MCF 10A (cell line): ENCODE measurements at regions of chr6 and their contacts with region 1.

Region 1: DNA sequence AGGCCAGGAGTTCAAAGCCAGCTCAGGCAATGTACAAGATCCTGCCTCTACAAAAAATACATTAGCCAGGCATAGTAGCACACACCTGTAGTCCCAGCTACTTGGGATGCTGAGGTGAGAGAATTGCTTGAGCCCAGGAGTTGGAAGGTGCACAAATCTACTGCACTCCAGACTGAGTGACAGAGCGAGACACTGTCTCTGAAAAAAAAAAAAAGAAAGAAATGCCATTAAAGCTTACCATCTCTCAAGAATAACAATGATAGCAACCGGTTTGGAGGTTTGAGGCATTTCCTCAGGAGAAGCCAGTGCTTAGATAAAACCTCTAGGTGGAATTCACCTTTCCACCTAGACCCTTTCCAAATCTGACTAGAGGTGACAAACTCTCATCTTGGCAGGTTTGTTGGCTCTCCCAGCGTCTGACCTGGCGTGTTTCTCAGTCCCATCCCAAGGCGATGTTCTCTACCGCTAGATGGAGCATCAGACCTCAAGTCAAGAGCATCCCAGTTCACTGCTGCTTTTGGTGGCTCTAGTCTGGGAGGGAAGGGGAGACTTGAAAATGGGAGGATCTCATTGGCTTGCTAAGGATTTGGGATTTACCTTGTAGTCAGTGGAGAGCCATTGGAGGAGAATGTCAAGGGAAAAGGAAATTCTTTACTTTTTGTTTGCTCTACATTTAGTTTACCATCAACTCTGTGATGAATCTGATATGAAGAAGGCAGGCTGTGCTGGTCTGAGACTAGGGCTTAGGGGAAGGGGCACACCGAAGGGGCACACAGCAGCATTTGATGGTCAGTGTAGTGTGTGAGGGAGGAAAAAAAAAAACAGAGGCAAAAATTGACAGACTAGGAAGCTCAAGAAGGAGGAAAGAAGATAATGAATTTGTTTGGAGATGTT is 67.9 kb downstream of the NCOA7 start:
- DNase-seq: peak; percentile 86
- H3K4me3 Mint-ChIP-seq: no peak overlapping the region
- H3K27ac Mint-ChIP-seq: peak overlapping the region; percentile 49
- H3K4me1 Mint-ChIP-seq: peaks cover 25% of the 10 kb centered on the region
- H3K27me3 Mint-ChIP-seq: no peaks in the 10 kb centered on the region
- CTCF ChIP-seq: peak; percentile 61

Region 2: GRCh38 chr6:125844989-125845388 is 13.7 kb before region 1 on chr6:
- CTCF ChIA-PET with region 1: interaction called, 19 read pairs
- POLR2A ChIA-PET with region 1: interaction called, 4 read pairs
- intact Hi-C with region 1: no loop called
- DNase-seq: no peak
- H3K4me3 Mint-ChIP-seq: no peak overlapping the region
- H3K27ac Mint-ChIP-seq: no peak overlapping the region
- H3K4me1 Mint-ChIP-seq: no peaks in the 10 kb centered on the region
- H3K27me3 Mint-ChIP-seq: no peaks in the 10 kb centered on the region
- CTCF ChIP-seq: no peak

Region 3: GRCh38 chr6:125906158-125906998 is 47.7 kb after region 1 on chr6:
- CTCF ChIA-PET with region 1: interaction called, 24 read pairs
- POLR2A ChIA-PET with region 1: interaction called, 3 read pairs
- intact Hi-C with region 1: no loop called
- DNase-seq: peak; percentile 69
- H3K4me3 Mint-ChIP-seq: no peak overlapping the region
- H3K27ac Mint-ChIP-seq: peak overlapping the region; percentile 24
- H3K4me1 Mint-ChIP-seq: peaks cover 41% of the 10 kb centered on the region
- H3K27me3 Mint-ChIP-seq: no peaks in the 10 kb centered on the region
- CTCF ChIP-seq: peak; percentile 59

Region 4: GRCh38 chr6:125918681-125919566 is 60.2 kb after region 1 on chr6:
- CTCF ChIA-PET with region 1: interaction called, 7 read pairs
- POLR2A ChIA-PET with region 1: interaction called, 10 read pairs
- intact Hi-C with region 1: no loop called
- DNase-seq: peak; percentile 97
- H3K4me3 Mint-ChIP-seq: peak overlapping the region; percentile 90
- H3K27ac Mint-ChIP-seq: peak overlapping the region; percentile 99
- H3K4me1 Mint-ChIP-seq: peaks cover 47% of the 10 kb centered on the region
- H3K27me3 Mint-ChIP-seq: no peaks in the 10 kb centered on the region
- CTCF ChIP-seq: no peak

Region 5: DNA sequence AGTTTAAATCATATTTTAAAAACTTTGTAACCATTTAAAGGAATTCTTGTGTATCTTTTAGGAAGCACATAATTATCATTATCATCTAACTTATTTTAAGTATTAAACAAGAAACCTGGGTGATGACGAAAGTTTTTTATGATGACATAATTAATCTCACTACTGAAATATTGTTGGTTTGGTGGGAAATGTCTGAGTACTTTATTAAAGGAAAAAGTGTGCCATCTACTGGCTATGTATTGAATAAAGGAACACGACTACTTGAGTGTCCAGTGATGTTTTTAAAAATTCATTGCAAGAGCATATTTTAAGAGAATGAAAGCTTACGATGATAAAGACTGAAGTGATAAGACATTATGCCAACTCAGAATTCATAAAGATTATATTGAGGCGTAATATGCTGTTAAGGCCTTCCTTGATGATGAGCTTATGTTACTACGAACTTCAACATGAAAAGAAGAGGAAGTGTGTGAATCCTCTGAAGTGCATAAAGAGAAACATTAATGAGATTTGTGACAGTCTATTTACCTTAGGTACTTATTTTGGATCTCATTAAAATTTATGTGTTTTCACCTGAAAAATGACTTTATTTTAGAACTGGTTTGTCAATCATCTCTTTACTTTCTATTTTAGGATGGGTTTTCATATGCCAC is 115.7 kb after region 1 on chr6:
- CTCF ChIA-PET with region 1: interaction called, 45 read pairs
- POLR2A ChIA-PET with region 1: interaction called, 5 read pairs
- intact Hi-C with region 1: loop called (anchors 1 kb)
- DNase-seq: peak; percentile 66
- H3K4me3 Mint-ChIP-seq: no peak overlapping the region
- H3K27ac Mint-ChIP-seq: no peak overlapping the region
- H3K4me1 Mint-ChIP-seq: peaks cover 5% of the 10 kb centered on the region
- H3K27me3 Mint-ChIP-seq: no peaks in the 10 kb centered on the region
- CTCF ChIP-seq: peak; percentile 44

Region 6: GRCh38 chr6:125986300-125987025 is 127.8 kb after region 1 on chr6 and contains the start of gene TRMT11:
- CTCF ChIA-PET with region 1: interaction called, 11 read pairs
- POLR2A ChIA-PET with region 1: interaction called, 4 read pairs
- intact Hi-C with region 1: no loop called
- DNase-seq: peak; percentile 92
- H3K4me3 Mint-ChIP-seq: no peak within 1 kb of the TSS
- H3K27ac Mint-ChIP-seq: no peak within 1 kb of the TSS
- H3K4me1 Mint-ChIP-seq: no peaks in the 10 kb centered on the region
- H3K27me3 Mint-ChIP-seq: no peaks in the 10 kb centered on the region
- CTCF ChIP-seq: no peak
- total RNA-seq, gene TRMT11: 28.8 and 32.5 TPM in 2 replicates

Region 7: DNA sequence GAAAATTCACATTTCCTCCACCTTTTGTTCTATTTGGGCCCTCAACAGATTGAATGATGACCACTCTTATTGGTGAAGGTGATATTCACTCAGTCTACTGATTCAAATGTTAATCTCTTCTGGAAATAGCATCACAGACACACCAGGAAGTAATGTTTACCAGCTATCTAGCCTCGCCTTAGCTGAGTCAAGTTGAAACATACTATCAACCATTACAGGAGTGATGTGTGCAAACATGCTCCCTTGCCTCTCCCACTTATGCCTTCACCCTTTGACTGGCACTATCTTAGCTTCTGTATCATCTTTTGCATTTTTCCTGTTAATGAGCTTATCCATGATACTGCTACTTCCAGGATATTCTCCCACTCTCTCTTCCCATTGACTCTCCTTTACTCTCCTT is 673.2 kb after region 1 on chr6:
- CTCF ChIA-PET with region 1: no interaction called
- POLR2A ChIA-PET with region 1: no interaction called
- intact Hi-C with region 1: no loop called
- DNase-seq: no peak
- H3K4me3 Mint-ChIP-seq: no peak overlapping the region
- H3K27ac Mint-ChIP-seq: no peak overlapping the region
- H3K4me1 Mint-ChIP-seq: no peaks in the 10 kb centered on the region
- H3K27me3 Mint-ChIP-seq: peaks cover 44% of the 10 kb centered on the region
- CTCF ChIP-seq: no peak